ENCODE measurements at regions of chr19 and their contacts with region 1.

Region 1: DNA sequence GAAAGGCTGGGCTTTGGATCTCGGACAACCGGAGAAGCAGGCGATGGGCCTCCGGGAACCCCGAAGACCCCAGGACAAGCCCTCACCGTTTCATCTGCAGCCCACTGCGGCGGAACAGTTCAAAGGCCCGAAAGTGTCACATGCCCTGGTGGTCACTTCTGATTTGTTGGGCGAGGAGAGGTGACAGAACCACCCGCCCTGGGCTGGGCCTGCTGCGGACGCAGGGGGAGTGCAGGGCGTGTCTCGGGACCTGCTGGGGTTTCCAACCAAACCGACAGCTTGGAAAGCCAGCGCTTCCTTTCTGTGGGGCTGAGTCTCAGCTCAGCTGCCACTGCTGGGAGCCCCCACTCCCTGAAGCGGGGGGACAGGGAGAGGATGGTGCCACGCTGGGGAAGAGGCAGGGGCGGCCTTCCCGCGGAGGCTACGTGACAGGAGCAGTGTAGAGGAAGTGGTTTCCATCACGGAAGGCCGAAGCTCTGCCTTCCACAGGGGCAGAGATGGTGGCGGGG is 22.8 kb upstream of the ZBTB7A start:
- DNase-seq: peak; percentile 72
- H3K4me3 Mint-ChIP-seq: peak overlapping the region; percentile 81
- H3K27ac Mint-ChIP-seq: peak overlapping the region; percentile 94
- H3K4me1 Mint-ChIP-seq: peaks cover 27% of the 10 kb centered on the region
- H3K27me3 Mint-ChIP-seq: no peaks in the 10 kb centered on the region

Region 2: DNA sequence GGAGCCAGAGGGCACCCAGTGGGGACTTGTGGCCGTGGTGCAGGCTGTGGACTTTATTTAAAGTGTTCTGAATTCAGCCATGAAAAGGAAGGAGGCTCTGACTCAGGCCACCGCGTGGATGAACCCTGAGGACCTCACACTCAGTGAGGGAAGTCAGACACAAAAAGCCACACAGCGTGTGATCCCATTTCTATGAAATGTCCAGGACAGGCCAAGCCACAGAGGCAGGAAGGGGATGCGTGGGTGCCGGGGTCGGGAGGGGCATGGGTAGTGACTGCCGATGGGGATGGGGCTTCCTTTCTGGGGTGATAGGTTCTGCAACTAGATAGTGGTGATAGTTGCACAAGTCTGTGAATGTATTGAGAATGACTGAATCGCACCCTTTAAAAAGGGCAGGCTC is 14.1 kb before region 1 on chr19:
- intact Hi-C with region 1: loop called (anchors 2 kb)
- DNase-seq: no peak
- H3K4me3 Mint-ChIP-seq: peak overlapping the region; percentile 30
- H3K27ac Mint-ChIP-seq: peak overlapping the region; percentile 82
- H3K4me1 Mint-ChIP-seq: peaks cover 22% of the 10 kb centered on the region
- H3K27me3 Mint-ChIP-seq: no peaks in the 10 kb centered on the region